Heart left ventricle (tissue), 16 donors: ENCODE measurements at regions of chr3 and their contacts with region 1.

Region 1: GRCh38 chr3:106206146-106206545 is 337.3 kb upstream of the CBLB start:
- DNase-seq: peak in 2 of 5 donors; percentile 15 to 23
- ATAC-seq: peak in 3 of 4 donors; percentile 62 to 91 (median 72)
- H3K4me3 ChIP-seq: peak overlapping the region in 5 of 12 donors; percentile 6 to 25 (median 17)
- H3K27ac ChIP-seq: peak overlapping the region in 8 of 12 donors; percentile 3 to 69 (median 46)
- H3K4me1 ChIP-seq: peaks cover 0 to 27% (median 5%) of the 10 kb centered on the region in 12 donors
- H3K27me3 ChIP-seq: no peaks in the 10 kb centered on the region
- CTCF ChIP-seq: no peak
- POLR2A ChIP-seq: no peak

Region 2: DNA sequence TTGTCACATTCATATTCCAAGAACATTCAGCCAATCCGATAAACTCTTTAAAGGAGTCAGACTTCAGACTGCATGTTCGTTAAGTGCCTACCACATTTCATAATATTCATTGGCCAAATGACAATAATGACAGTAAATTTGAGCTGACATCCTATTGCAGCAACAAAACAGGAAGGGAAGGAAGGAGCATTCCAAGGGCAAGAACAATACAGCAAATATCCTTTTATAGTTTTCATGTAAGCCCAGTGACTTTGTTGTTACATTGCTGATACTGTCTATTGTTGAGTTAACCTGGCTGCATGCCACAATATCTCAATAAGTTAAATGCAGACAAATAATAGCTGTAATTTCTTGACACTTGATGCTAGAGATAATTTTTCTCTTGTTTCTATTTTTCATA is 320.9 kb before region 1 on chr3:
- intact Hi-C with region 1: loop called in 1 of 10 experiments (anchors 10 kb)
- DNase-seq: no peak
- ATAC-seq: peak; percentile 15 to 61 (median 36)
- H3K4me3 ChIP-seq: no peak overlapping the region
- H3K27ac ChIP-seq: peak overlapping the region in 1 of 12 donors; percentile 32
- H3K4me1 ChIP-seq: peaks cover 0 to 13% (median 6%) of the 10 kb centered on the region in 12 donors
- H3K27me3 ChIP-seq: no peaks in the 10 kb centered on the region
- CTCF ChIP-seq: no peak
- POLR2A ChIP-seq: no peak

Region 3: DNA sequence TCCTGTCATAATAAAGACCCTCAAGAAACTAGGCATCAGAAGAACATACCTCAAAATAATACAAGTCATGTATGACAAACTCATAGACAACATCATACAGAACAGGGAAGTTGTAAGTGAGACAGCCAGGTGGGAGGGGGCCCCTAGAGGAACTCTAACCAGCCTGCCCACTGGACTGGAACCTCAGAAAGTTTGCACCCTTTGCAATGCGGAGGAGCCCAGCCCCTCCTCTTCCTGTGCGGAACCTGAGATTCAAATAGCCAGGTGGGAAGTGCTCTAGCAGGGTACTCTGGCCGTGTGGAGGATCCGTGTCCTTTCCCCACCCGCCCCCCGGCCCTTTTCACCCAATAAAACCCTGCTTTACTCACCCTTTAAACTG is 49.7 kb after region 1 on chr3:
- intact Hi-C with region 1: no loop called
- DNase-seq: no peak
- ATAC-seq: no peak
- H3K4me3 ChIP-seq: no peak overlapping the region
- H3K27ac ChIP-seq: no peak overlapping the region
- H3K4me1 ChIP-seq: no peaks in the 10 kb centered on the region
- H3K27me3 ChIP-seq: no peaks in the 10 kb centered on the region
- CTCF ChIP-seq: no peak
- POLR2A ChIP-seq: no peak

Region 4: DNA sequence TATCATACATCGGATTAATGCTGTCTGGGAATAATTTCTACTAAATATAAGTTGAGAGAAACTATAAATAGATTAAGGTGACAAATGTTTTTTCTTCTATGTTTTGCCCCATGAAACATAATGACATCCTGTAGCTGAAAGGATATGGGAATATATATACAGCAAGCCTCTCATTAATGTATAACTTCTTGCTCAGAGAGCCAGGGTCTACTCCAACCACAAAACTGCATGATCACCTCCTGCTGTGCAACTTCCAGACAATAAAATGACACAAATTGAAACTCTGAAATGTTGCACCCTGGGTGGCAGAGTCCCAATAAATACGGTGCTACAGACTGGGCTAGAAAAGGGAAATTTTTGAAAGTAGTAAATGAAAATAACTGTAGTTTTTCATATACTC is 234.5 kb after region 1 on chr3:
- intact Hi-C with region 1: no loop called
- DNase-seq: no peak
- ATAC-seq: no peak
- H3K4me3 ChIP-seq: no peak overlapping the region
- H3K27ac ChIP-seq: no peak overlapping the region
- H3K4me1 ChIP-seq: peaks cover 0 to 3% (median 0%) of the 10 kb centered on the region in 12 donors
- H3K27me3 ChIP-seq: no peaks in the 10 kb centered on the region
- CTCF ChIP-seq: no peak
- POLR2A ChIP-seq: no peak